AG04450 (cell line): ENCODE measurements at regions of chr2 and their contacts with region 1.

Region 1: GRCh38 chr2:28828382-28828781 is 17.7 kb downstream of the SPDYA start:
- DNase-seq: no peak
- H3K4me3 ChIP-seq: no peak overlapping the region
- H3K27ac ChIP-seq: no peak overlapping the region
- H3K27me3 ChIP-seq: no peaks in the 10 kb centered on the region
- CTCF ChIP-seq: no peak

Region 2: DNA sequence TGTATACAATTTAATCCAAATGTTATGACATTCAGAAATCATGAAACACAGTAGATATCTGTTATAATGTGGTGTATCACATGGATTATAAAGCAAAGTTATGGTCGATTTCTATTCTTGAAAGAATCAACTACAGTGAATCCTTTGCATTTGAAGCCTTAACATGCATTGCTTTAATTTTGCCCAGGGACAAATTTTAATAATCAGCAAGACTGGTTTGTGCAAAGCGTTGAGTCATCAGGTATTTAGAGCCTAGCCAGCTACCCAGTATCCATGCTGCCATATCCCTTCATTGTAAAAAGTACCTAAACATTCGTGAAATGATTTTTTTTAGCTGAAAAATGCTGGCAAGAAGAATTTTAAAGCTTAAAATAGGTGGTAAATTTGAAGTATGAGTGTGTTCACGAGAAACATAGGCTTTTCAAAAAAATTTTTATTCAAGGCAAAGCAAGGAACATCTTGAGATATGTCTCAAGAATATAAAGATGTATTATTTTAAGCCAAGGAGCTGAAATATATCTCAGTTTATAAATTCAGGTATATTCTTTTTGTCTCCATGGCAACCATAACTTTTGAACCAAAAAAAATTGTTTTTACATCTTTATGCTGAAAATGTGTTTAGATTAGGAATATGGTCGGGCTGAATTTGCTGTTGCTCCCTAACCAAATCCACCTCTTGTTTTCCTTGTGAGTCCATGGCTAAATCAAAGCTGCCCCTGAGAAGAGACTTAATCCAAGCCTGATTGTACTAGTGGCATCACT is 26.5 kb before region 1 on chr2:
- CTCF ChIA-PET with region 1: no interaction called
- POLR2A ChIA-PET with region 1: no interaction called
- DNase-seq: no peak
- H3K4me3 ChIP-seq: no peak overlapping the region
- H3K27ac ChIP-seq: no peak overlapping the region
- H3K27me3 ChIP-seq: no peaks in the 10 kb centered on the region
- CTCF ChIP-seq: no peak

Region 3: DNA sequence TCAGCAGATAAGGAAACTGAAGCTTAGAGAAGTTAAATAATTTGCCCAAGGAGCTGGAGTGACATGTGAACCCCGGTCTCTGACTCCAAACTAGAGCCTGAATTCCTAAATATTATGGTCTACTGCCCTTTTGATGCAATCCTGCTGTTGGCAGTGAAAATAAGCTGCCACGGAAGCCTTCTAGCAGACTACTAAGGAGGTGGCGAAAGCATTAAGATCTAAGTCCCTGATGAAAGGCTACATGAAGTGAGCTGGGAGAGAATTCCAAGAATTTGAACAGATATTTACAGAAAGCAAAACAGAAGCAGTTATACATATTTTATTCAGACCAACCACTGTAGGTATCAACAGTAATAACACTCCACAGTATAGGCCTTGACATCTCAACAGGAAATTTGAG is 13.7 kb after region 1 on chr2:
- CTCF ChIA-PET with region 1: no interaction called
- POLR2A ChIA-PET with region 1: interaction called, 11 read pairs
- DNase-seq: no peak
- H3K4me3 ChIP-seq: no peak overlapping the region
- H3K27ac ChIP-seq: peak overlapping the region; percentile 0
- H3K27me3 ChIP-seq: no peaks in the 10 kb centered on the region
- CTCF ChIP-seq: no peak